Naive thymus-derived CD4-positive, alpha-beta T cell (primary cell): ENCODE measurements at regions of chr10 and their contacts with region 1.

Region 1: DNA sequence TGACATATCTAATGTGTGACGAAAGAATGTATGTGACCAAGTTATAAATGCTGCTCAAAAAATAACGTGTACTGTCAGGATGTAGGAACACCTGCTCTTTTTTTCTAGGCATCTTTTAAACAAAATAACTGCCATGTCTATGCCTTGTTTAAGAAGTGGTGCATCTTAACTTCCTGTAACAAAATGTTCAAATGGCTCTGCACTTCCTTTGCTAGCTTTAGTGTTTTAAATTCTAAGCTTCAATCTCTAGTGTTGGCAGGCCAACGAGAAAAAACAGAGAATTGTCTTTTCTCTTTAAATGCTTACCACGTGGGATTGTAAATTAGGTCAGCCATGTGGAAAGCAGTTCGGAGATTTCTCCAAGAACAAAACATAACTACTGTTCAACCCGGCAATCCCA is 14.6 kb upstream of the PDSS1 start:
- DNase-seq: peak in 7 of 9 donors; percentile 65 to 91 (median 85)
- ATAC-seq: peak; percentile 91
- H3K4me3 ChIP-seq: no peak overlapping the region
- H3K4me3 Mint-ChIP-seq: peak overlapping the region in 9 of 10 donors; percentile 26 to 83 (median 71)
- H3K27ac ChIP-seq: peak overlapping the region; percentile 69
- H3K27ac Mint-ChIP-seq: peak overlapping the region in 8 of 9 donors; percentile 94 to 99 (median 97)
- H3K4me1 ChIP-seq: peaks cover 0 to 33% of the 10 kb centered on the region in 2 donors
- H3K4me1 Mint-ChIP-seq: peaks cover 14 to 63% (median 39%) of the 10 kb centered on the region in 7 donors
- H3K27me3 ChIP-seq: no peaks in the 10 kb centered on the region
- H3K27me3 Mint-ChIP-seq: peaks cover 0 to 9% (median 0%) of the 10 kb centered on the region in 5 donors

Region 2: GRCh38 chr10:26334932-26335573 is 347.9 kb before region 1 on chr10:
- CTCF ChIA-PET with region 1: no interaction called
- POLR2A ChIA-PET with region 1: no interaction called
- intact Hi-C with region 1: no loop called
- DNase-seq: peak; percentile 46 to 78 (median 70)
- ATAC-seq: peak; percentile 93
- H3K4me3 ChIP-seq: peak overlapping the region; percentile 43
- H3K4me3 Mint-ChIP-seq: peak overlapping the region; percentile 53 to 92 (median 86)
- H3K27ac ChIP-seq: no peak overlapping the region
- H3K27ac Mint-ChIP-seq: peak overlapping the region in 7 of 9 donors; percentile 2 to 83 (median 60)
- H3K4me1 ChIP-seq: no peaks in the 10 kb centered on the region
- H3K4me1 Mint-ChIP-seq: peaks cover 0 to 12% (median 2%) of the 10 kb centered on the region in 7 donors
- H3K27me3 ChIP-seq: no peaks in the 10 kb centered on the region
- H3K27me3 Mint-ChIP-seq: peaks cover 0 to 2% (median 0%) of the 10 kb centered on the region in 5 donors

Region 3: DNA sequence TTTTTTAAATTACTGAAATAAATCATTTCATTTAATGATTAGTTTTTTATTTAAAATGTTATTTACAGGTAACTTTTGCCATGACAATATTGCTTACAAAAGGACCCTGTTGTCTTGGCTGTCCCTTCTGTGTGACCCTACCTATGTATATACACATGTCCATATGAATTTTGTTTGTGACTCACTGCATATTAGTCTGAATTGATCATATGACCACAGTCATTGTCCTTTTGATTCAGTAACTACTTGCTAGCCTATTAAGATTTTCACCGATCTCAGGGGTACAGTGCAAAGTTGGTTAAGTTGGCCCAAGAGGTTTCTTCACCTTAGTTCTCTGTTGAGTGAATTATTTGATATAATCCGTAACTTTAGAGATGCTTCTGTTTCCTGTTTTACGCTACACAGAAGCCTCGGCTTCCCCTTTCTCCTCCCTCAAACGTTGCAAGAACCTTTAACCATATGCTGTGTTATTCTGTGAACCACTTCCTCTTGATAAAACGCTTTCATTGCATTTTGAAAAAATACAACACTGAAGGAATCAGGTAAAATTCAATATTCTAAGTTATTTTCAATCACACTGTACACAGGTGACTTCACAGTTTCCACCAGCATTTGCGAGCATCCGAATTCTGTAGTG is 200.9 kb before region 1 on chr10:
- CTCF ChIA-PET with region 1: no interaction called
- POLR2A ChIA-PET with region 1: interaction called, 3 read pairs
- intact Hi-C with region 1: loop called in 1 of 2 experiments (anchors 5 kb)
- DNase-seq: peak in 7 of 9 donors; percentile 65 to 90 (median 84)
- ATAC-seq: peak; percentile 91
- H3K4me3 ChIP-seq: peak overlapping the region; percentile 46
- H3K4me3 Mint-ChIP-seq: peak overlapping the region; percentile 68 to 88 (median 76)
- H3K27ac ChIP-seq: peak overlapping the region; percentile 71
- H3K27ac Mint-ChIP-seq: peak overlapping the region; percentile 85 to 97 (median 95)
- H3K4me1 ChIP-seq: peaks cover 81 to 85% of the 10 kb centered on the region in 2 donors
- H3K4me1 Mint-ChIP-seq: peaks cover 60 to 85% (median 79%) of the 10 kb centered on the region in 7 donors
- H3K27me3 ChIP-seq: no peaks in the 10 kb centered on the region
- H3K27me3 Mint-ChIP-seq: no peaks in the 10 kb centered on the region

Region 4: GRCh38 chr10:26612151-26612915 is 70.6 kb before region 1 on chr10:
- CTCF ChIA-PET with region 1: no interaction called
- POLR2A ChIA-PET with region 1: no interaction called
- intact Hi-C with region 1: loop called in 1 of 2 experiments (anchors 2 kb)
- DNase-seq: no peak
- ATAC-seq: no peak
- H3K4me3 ChIP-seq: no peak overlapping the region
- H3K4me3 Mint-ChIP-seq: no peak overlapping the region
- H3K27ac ChIP-seq: no peak overlapping the region
- H3K27ac Mint-ChIP-seq: no peak overlapping the region
- H3K4me1 ChIP-seq: no peaks in the 10 kb centered on the region
- H3K4me1 Mint-ChIP-seq: no peaks in the 10 kb centered on the region
- H3K27me3 ChIP-seq: no peaks in the 10 kb centered on the region
- H3K27me3 Mint-ChIP-seq: peaks cover 0 to 7% (median 0%) of the 10 kb centered on the region in 5 donors

Region 5: DNA sequence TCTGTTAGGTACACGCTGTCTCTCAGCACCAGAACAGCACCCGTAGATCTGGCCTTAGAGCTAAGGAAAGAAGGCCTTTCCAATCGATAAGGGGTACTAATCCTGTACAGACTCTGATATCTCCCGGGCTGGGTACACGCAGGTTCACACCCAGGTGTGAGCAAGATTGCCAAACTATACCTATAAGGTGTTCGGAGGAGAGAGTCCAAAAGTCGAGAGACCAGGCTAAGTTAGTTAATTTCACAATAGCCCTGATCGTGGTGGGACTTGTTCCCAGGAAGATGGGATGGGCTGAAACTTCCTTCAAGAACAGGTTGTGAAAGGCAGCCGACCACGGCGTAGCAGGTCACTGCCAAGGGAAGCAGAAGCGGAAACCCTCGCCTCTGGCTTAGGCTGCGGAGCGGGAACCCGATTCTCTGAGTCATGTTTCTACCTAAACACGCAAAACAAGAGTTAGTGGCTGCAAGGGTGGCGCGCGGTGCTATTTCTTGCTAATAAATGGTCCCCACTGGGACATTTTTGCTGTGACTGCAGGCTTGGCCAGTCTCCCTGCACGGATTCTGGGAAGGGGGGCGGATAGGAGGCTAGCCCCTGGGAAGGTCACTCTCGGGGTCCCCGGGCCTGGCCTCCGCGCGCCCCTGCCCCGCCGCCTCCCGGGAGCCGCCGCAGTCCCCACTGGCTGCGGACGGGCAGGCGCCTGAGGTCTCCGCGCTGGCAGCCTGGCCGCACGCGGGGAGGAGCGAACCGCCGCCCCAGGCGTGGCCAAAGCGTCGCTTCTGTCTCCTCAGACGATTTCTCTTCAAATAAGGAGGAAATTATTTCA is 60.8 kb before region 1 on chr10:
- CTCF ChIA-PET with region 1: no interaction called
- POLR2A ChIA-PET with region 1: no interaction called
- intact Hi-C with region 1: loop called in 1 of 2 experiments (anchors 5 kb)
- DNase-seq: peak in 4 of 9 donors; percentile 10 to 27 (median 20)
- ATAC-seq: peak; percentile 78
- H3K4me3 ChIP-seq: no peak overlapping the region
- H3K4me3 Mint-ChIP-seq: peak overlapping the region; percentile 35 to 83 (median 76)
- H3K27ac ChIP-seq: peak overlapping the region; percentile 41
- H3K27ac Mint-ChIP-seq: peak overlapping the region in 7 of 9 donors; percentile 18 to 78 (median 52)
- H3K4me1 ChIP-seq: no peaks in the 10 kb centered on the region
- H3K4me1 Mint-ChIP-seq: peaks cover 0 to 17% (median 13%) of the 10 kb centered on the region in 7 donors
- H3K27me3 ChIP-seq: peaks cover 0 to 7% of the 10 kb centered on the region in 2 donors
- H3K27me3 Mint-ChIP-seq: peaks cover 9 to 45% (median 21%) of the 10 kb centered on the region in 5 donors

Region 6: GRCh38 chr10:26697163-26697921 is 14.4 kb after region 1 on chr10 and contains the start of gene PDSS1:
- CTCF ChIA-PET with region 1: interaction called, 5 read pairs
- POLR2A ChIA-PET with region 1: interaction called, 21 read pairs
- intact Hi-C with region 1: loop called in 1 of 2 experiments (anchors 1 kb)
- DNase-seq: peak; percentile 34 to 77 (median 60)
- ATAC-seq: peak; percentile 77
- H3K4me3 ChIP-seq: peak within 1 kb of the TSS; percentile 77
- H3K4me3 Mint-ChIP-seq: peak within 1 kb of the TSS; percentile 92 to 100 (median 98)
- H3K27ac ChIP-seq: peak within 1 kb of the TSS; percentile 85
- H3K27ac Mint-ChIP-seq: peak within 1 kb of the TSS; percentile 94 to 99 (median 97)
- H3K4me1 ChIP-seq: peaks cover 7 to 17% of the 10 kb centered on the region in 2 donors
- H3K4me1 Mint-ChIP-seq: peaks cover 28 to 47% (median 34%) of the 10 kb centered on the region in 7 donors
- H3K27me3 ChIP-seq: no peaks in the 10 kb centered on the region
- H3K27me3 Mint-ChIP-seq: no peaks in the 10 kb centered on the region
- total RNA-seq, gene PDSS1: 3.8 to 15.2 (median 4.7) TPM

Region 7: GRCh38 chr10:26725837-26726727 is 43.2 kb after region 1 on chr10:
- CTCF ChIA-PET with region 1: interaction called, 3 read pairs
- POLR2A ChIA-PET with region 1: interaction called, 3 read pairs
- intact Hi-C with region 1: loop called in 1 of 2 experiments (anchors 2 kb)
- DNase-seq: peak; percentile 16 to 57 (median 45)
- ATAC-seq: peak; percentile 74
- H3K4me3 ChIP-seq: no peak overlapping the region
- H3K4me3 Mint-ChIP-seq: no peak overlapping the region
- H3K27ac ChIP-seq: no peak overlapping the region
- H3K27ac Mint-ChIP-seq: peak overlapping the region in 1 of 9 donors; percentile 29
- H3K4me1 ChIP-seq: peaks cover 0 to 13% of the 10 kb centered on the region in 2 donors
- H3K4me1 Mint-ChIP-seq: peaks cover 0 to 15% (median 6%) of the 10 kb centered on the region in 7 donors
- H3K27me3 ChIP-seq: no peaks in the 10 kb centered on the region
- H3K27me3 Mint-ChIP-seq: no peaks in the 10 kb centered on the region

Region 8: GRCh38 chr10:26869528-26869927 is 186.6 kb after region 1 on chr10:
- CTCF ChIA-PET with region 1: no interaction called
- POLR2A ChIA-PET with region 1: no interaction called
- intact Hi-C with region 1: no loop called
- DNase-seq: peak in 1 of 9 donors; percentile 11
- ATAC-seq: peak; percentile 41
- H3K4me3 ChIP-seq: no peak overlapping the region
- H3K4me3 Mint-ChIP-seq: peak overlapping the region in 9 of 10 donors; percentile 20 to 62 (median 49)
- H3K27ac ChIP-seq: no peak overlapping the region
- H3K27ac Mint-ChIP-seq: peak overlapping the region; percentile 10 to 81 (median 61)
- H3K4me1 ChIP-seq: no peaks in the 10 kb centered on the region
- H3K4me1 Mint-ChIP-seq: peaks cover 5 to 13% (median 6%) of the 10 kb centered on the region in 7 donors
- H3K27me3 ChIP-seq: no peaks in the 10 kb centered on the region
- H3K27me3 Mint-ChIP-seq: peaks cover 0 to 21% (median 3%) of the 10 kb centered on the region in 5 donors

Region 9: DNA sequence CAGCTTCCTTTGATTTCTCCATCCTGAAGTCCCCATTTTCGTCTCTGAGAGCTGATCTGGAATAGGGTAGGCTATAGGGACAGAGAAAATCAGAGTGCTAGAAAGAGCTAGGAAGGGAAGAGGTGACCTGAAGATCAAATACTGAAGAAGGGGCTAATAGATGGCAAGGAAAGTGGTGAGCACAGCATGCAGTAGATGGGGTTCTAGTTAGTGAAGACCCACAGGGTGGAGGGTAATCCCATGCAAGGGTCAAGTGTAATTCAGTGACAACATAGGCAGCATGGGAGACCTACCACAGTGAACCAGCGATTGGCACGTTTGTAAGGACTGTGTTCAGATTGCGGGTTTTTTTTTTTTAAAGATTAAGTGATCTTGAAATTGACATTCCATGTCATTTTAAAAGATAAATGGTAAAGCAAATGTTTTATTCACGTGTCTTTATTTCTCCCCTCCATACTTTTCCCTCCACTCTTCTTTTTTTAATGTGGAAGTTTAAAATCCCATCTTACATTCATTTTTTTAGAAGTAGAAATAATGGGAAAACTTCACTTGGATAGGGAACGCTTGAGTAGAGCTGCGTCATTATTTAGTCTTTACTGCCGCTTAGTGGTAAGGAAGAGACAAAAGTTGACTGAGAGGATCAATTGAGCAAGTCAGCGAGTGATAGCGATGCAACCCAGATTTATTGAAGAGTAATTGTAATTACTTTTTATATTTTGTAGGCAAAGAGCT is 198.8 kb after region 1 on chr10:
- CTCF ChIA-PET with region 1: no interaction called
- POLR2A ChIA-PET with region 1: no interaction called
- intact Hi-C with region 1: loop called in 1 of 2 experiments (anchors 2 kb)
- DNase-seq: peak in 6 of 9 donors; percentile 23 to 60 (median 37)
- ATAC-seq: peak; percentile 87
- H3K4me3 ChIP-seq: no peak overlapping the region
- H3K4me3 Mint-ChIP-seq: no peak overlapping the region
- H3K27ac ChIP-seq: no peak overlapping the region
- H3K27ac Mint-ChIP-seq: no peak overlapping the region
- H3K4me1 ChIP-seq: no peaks in the 10 kb centered on the region
- H3K4me1 Mint-ChIP-seq: peaks cover 0 to 8% (median 0%) of the 10 kb centered on the region in 7 donors
- H3K27me3 ChIP-seq: no peaks in the 10 kb centered on the region
- H3K27me3 Mint-ChIP-seq: peaks cover 4 to 37% (median 13%) of the 10 kb centered on the region in 5 donors